ENCODE measurements at regions of chr21 and their contacts with region 1.

Region 1: GRCh38 chr21:44817506-44817880 is 369 bp downstream of the SUMO3 start:
- DNase-seq: peak; percentile 92 to 96 (median 94)
- H3K4me3 ChIP-seq: peak overlapping the region; percentile 59
- H3K27ac ChIP-seq: peak overlapping the region in 1 of 2 donors; percentile 93
- H3K4me1 ChIP-seq: peaks cover 14% of the 10 kb centered on the region
- H3K27me3 ChIP-seq: no peaks in the 10 kb centered on the region
- CTCF ChIP-seq: no peak
- EP300 ChIP-seq: no peak
- POLR2A ChIP-seq: no peak

Region 2: GRCh38 chr21:44873356-44874239 is 56.1 kb after region 1 on chr21 and contains the start of gene PTTG1IP:
- intact Hi-C with region 1: loop called in 2 of 4 experiments (anchors 2 kb)
- DNase-seq: peak; percentile 98 to 99 (median 99)
- H3K4me3 ChIP-seq: peak within 1 kb of the TSS; percentile 60
- H3K27ac ChIP-seq: peak within 1 kb of the TSS; percentile 71 to 85
- H3K4me1 ChIP-seq: peaks cover 16% of the 10 kb centered on the region
- H3K27me3 ChIP-seq: no peaks in the 10 kb centered on the region
- CTCF ChIP-seq: no peak
- EP300 ChIP-seq: no peak
- POLR2A ChIP-seq: peak; percentile 63
- total RNA-seq, gene PTTG1IP: 133 to 226 (median 143) TPM

Measured in ovary (tissue), 10 donors.